H1 (cell line): ENCODE measurements at regions of chr15 and their contacts with region 1.

Region 1: GRCh38 chr15:51907136-51907914 is 64.3 kb downstream of the LEO1 start:
- DNase-seq: no peak
- H3K4me3 ChIP-seq: no peak overlapping the region
- H3K27ac ChIP-seq: no peak overlapping the region; the same call in 1 of the 2 replicates
- H3K4me1 ChIP-seq: no peaks in the 10 kb centered on the region
- H3K27me3 ChIP-seq: peaks cover 0 to 1% (median 0%) of the 10 kb centered on the region in 4 experiments; a peak in 1 of 7 replicates
- CTCF ChIP-seq: peak; percentile 16 to 57 (median 48)
- EP300 ChIP-seq: no peak
- POLR2A ChIP-seq: no peak
- RAD21 ChIP-seq: peak; percentile 23 to 42; a peak in 3 of 4 replicates

Region 2: GRCh38 chr15:51802593-51802992 is 104.7 kb before region 1 on chr15:
- CTCF ChIA-PET with region 1: interaction called, 10 read pairs
- POLR2A ChIA-PET with region 1: no interaction called
- DNase-seq: no peak
- H3K4me3 ChIP-seq: no peak overlapping the region
- H3K27ac ChIP-seq: no peak overlapping the region
- H3K4me1 ChIP-seq: no peaks in the 10 kb centered on the region
- H3K27me3 ChIP-seq: no peaks in the 10 kb centered on the region
- CTCF ChIP-seq: no peak
- EP300 ChIP-seq: no peak
- POLR2A ChIP-seq: no peak
- RAD21 ChIP-seq: no peak

Region 3: GRCh38 chr15:51874751-51875528 is 32.4 kb before region 1 on chr15:
- CTCF ChIA-PET with region 1: interaction called, 10 read pairs
- POLR2A ChIA-PET with region 1: no interaction called
- DNase-seq: no peak
- H3K4me3 ChIP-seq: no peak overlapping the region
- H3K27ac ChIP-seq: no peak overlapping the region
- H3K4me1 ChIP-seq: no peaks in the 10 kb centered on the region; a peak in 2 of 7 replicates
- H3K27me3 ChIP-seq: no peaks in the 10 kb centered on the region
- CTCF ChIP-seq: no peak
- EP300 ChIP-seq: no peak
- POLR2A ChIP-seq: no peak
- RAD21 ChIP-seq: no peak

Region 4: GRCh38 chr15:51888593-51889195 is 18.6 kb before region 1 on chr15:
- CTCF ChIA-PET with region 1: interaction called, 29 read pairs
- POLR2A ChIA-PET with region 1: interaction called, 4 read pairs
- DNase-seq: no peak
- H3K4me3 ChIP-seq: no peak overlapping the region
- H3K27ac ChIP-seq: no peak overlapping the region
- H3K4me1 ChIP-seq: no peaks in the 10 kb centered on the region
- H3K27me3 ChIP-seq: no peaks in the 10 kb centered on the region
- CTCF ChIP-seq: peak in 2 of 3 experiments; percentile 31 to 61; a peak in 2 of 4 replicates
- EP300 ChIP-seq: no peak
- POLR2A ChIP-seq: no peak
- RAD21 ChIP-seq: peak in 1 of 2 experiments; percentile 26; a peak in 3 of 4 replicates

Region 5: GRCh38 chr15:51924156-51925068 is 17.1 kb after region 1 on chr15:
- CTCF ChIA-PET with region 1: interaction called, 14 read pairs
- POLR2A ChIA-PET with region 1: no interaction called
- DNase-seq: peak in 1 of 2 experiments; percentile 55
- H3K4me3 ChIP-seq: no peak overlapping the region
- H3K27ac ChIP-seq: no peak overlapping the region
- H3K4me1 ChIP-seq: peaks cover 0 to 2% (median 0%) of the 10 kb centered on the region in 4 experiments; a peak in 1 of 7 replicates
- H3K27me3 ChIP-seq: no peaks in the 10 kb centered on the region
- CTCF ChIP-seq: no peak
- EP300 ChIP-seq: no peak
- POLR2A ChIP-seq: no peak
- RAD21 ChIP-seq: no peak; a peak in 1 of 4 replicates